ENCODE measurements at regions of chr20 and their contacts with region 1.

Region 1: GRCh38 chr20:45890985-45891983 is at the starts of genes CTSA and NEURL2:
- DNase-seq: peak; percentile 94
- ATAC-seq: peak; percentile 80
- H3K4me3 Mint-ChIP-seq: peak within 1 kb of the TSS; percentile 89
- H3K27ac Mint-ChIP-seq: peak within 1 kb of the TSS; percentile 87
- H3K4me1 Mint-ChIP-seq: peaks cover 32% of the 10 kb centered on the region
- H3K27me3 Mint-ChIP-seq: no peaks in the 10 kb centered on the region
- total RNA-seq, gene CTSA: 36.4 to 45.6 TPM
- total RNA-seq, gene NEURL2: 1.2 to 1.9 TPM

Region 2: DNA sequence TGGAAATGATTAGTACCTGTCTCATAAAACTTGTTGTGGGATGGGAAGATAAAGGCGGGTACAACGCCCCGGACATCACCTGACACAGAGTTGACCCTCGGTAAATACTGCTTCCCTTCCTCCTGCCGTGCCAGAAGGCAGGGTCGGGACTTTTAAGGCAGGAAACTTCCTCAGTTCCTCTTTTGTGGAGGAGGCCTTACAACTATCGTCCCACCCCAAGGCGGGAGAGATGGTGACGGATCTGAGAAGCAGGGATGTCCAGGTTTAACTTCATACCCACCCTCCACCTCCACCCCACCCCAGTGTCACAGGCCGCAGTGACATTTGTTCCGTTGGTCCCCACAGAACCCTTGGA is 99.0 kb before region 1 on chr20:
- CTCF ChIA-PET with region 1: no interaction called
- POLR2A ChIA-PET with region 1: no interaction called
- intact Hi-C with region 1: loop called in 1 of 2 experiments (anchors 2 kb)
- DNase-seq: peak; percentile 12
- ATAC-seq: peak; percentile 2
- H3K4me3 Mint-ChIP-seq: peak overlapping the region; percentile 81
- H3K27ac Mint-ChIP-seq: peak overlapping the region; percentile 80
- H3K4me1 Mint-ChIP-seq: peaks cover 13% of the 10 kb centered on the region
- H3K27me3 Mint-ChIP-seq: no peaks in the 10 kb centered on the region

Region 3: DNA sequence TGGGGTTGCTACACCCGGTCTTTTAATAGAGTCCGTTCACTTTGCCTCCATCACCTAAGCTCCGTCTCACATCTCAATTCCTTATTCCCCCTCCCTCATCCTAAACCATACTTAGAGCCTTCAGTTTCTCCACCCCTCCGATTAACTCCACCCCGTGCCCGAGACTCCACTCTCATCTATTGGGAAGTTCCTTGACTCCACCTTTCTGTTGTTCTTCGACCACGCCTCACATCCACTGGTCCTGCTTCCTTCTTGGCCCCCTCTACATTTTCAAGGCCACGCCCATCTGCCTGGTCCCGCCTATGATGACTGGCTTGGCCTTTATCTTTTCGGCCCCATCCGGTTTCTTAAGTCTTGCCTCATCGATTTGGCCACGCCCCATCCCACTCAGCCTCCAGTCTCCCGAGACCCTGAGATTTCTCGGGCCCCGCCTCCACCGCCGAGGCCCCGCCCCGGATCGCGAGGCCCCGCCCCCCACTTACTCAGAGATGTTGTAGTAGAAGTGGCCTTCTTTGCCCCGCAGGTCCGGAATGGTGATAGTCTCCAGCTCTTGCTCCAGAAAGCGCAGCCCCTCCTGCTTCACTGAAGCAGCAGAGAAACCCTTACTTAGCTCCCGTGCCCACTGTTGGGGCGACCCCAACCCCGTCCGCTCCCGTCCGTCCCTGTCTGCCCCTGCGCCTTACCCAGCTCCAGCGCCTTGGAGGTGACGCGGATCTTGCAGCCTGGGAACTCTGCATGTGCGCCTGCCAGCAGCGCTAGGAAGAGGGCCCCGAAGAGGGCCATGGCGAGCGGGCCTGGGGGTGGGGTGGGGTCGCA is 19.6 kb after region 1 on chr20:
- CTCF ChIA-PET with region 1: interaction called, 5 read pairs
- POLR2A ChIA-PET with region 1: no interaction called
- intact Hi-C with region 1: loop called in 1 of 2 experiments (anchors 1 kb)
- DNase-seq: peak; percentile 98
- ATAC-seq: peak; percentile 92
- H3K4me3 Mint-ChIP-seq: peak overlapping the region; percentile 68
- H3K27ac Mint-ChIP-seq: peak overlapping the region; percentile 80
- H3K4me1 Mint-ChIP-seq: peaks cover 16% of the 10 kb centered on the region
- H3K27me3 Mint-ChIP-seq: peaks cover 12% of the 10 kb centered on the region

Region 4: GRCh38 chr20:45949542-45950329 is 58.5 kb after region 1 on chr20:
- CTCF ChIA-PET with region 1: no interaction called
- POLR2A ChIA-PET with region 1: no interaction called
- intact Hi-C with region 1: no loop called
- DNase-seq: no peak
- ATAC-seq: no peak
- H3K4me3 Mint-ChIP-seq: no peak overlapping the region
- H3K27ac Mint-ChIP-seq: no peak overlapping the region
- H3K4me1 Mint-ChIP-seq: peaks cover 3% of the 10 kb centered on the region
- H3K27me3 Mint-ChIP-seq: no peaks in the 10 kb centered on the region

Region 5: DNA sequence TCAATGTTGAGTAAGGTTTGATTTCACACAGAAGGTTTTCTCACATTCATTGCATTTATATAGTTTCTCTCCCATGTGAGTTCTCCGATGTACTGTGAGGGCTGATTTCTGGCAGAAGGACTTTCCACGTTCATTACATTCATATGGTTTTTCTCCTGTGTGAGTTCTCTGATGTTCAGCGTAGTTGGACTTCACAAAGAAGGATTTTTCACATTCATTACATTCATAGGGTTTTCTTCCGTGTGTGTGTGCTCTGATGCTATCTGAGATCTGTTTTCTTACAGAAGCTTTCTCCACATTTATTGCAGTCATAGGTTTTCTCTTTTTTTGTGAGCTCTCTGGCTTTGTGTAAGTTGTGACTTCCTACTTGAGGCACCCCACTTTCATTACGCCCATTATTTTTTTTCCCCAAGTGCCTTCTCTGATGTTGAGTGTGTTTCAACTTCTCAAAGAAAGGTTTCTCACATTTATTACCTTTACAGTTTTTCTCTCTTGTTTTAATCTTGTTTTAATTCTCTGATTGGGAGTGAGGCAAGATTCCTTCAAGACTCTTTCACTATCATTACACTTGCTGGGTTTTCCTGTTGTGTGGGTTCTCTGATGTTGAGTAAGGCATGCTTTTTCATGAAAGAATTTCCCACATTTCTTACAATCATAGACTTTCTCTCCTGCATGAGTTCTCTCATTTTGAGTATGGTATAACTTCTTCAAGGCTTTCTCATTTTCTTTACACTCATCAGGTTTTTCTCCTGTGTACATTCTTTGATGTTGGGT is 565.2 kb after region 1 on chr20:
- CTCF ChIA-PET with region 1: no interaction called
- POLR2A ChIA-PET with region 1: no interaction called
- intact Hi-C with region 1: no loop called
- DNase-seq: no peak
- ATAC-seq: no peak
- H3K4me3 Mint-ChIP-seq: no peak overlapping the region
- H3K27ac Mint-ChIP-seq: no peak overlapping the region
- H3K4me1 Mint-ChIP-seq: no peaks in the 10 kb centered on the region
- H3K27me3 Mint-ChIP-seq: peaks cover 34% of the 10 kb centered on the region

Measured in activated CD4-positive, alpha-beta T cell treated with anti-CD3 and anti-CD28 coated beads for 36 hours (primary cell).